ENCODE measurements at regions of chr3 and their contacts with region 1.

Region 1: GRCh38 chr3:20523293-20523692 is 337.3 kb upstream of the SGO1 start:
- DNase-seq: no peak
- ATAC-seq: no peak
- H3K4me3 ChIP-seq: no peak overlapping the region
- H3K27ac ChIP-seq: no peak overlapping the region
- H3K4me1 ChIP-seq: no peaks in the 10 kb centered on the region
- H3K27me3 ChIP-seq: no peaks in the 10 kb centered on the region
- CTCF ChIP-seq: no peak

Region 2: GRCh38 chr3:20361000-20361399 is 162.3 kb before region 1 on chr3:
- intact Hi-C with region 1: loop called in 1 of 10 experiments (anchors 5 kb)
- DNase-seq: no peak
- ATAC-seq: no peak
- H3K4me3 ChIP-seq: no peak overlapping the region
- H3K27ac ChIP-seq: no peak overlapping the region
- H3K4me1 ChIP-seq: no peaks in the 10 kb centered on the region
- H3K27me3 ChIP-seq: no peaks in the 10 kb centered on the region
- CTCF ChIP-seq: no peak

Measured in heart right ventricle (tissue), 16 donors.